Psoas muscle (tissue), 8 donors: ENCODE measurements at regions of chr2 and their contacts with region 1.

Region 1: GRCh38 chr2:190648289-190649034 is 421 bp upstream of the NAB1 start:
- DNase-seq: peak; percentile 92 to 93
- ATAC-seq: peak; percentile 86 to 88 (median 87)
- H3K4me3 ChIP-seq: peak overlapping the region; percentile 91
- H3K27ac ChIP-seq: peak overlapping the region; percentile 79
- H3K4me1 ChIP-seq: peaks cover 8% of the 10 kb centered on the region
- H3K27me3 ChIP-seq: no peaks in the 10 kb centered on the region
- CTCF ChIP-seq: no peak

Region 2: DNA sequence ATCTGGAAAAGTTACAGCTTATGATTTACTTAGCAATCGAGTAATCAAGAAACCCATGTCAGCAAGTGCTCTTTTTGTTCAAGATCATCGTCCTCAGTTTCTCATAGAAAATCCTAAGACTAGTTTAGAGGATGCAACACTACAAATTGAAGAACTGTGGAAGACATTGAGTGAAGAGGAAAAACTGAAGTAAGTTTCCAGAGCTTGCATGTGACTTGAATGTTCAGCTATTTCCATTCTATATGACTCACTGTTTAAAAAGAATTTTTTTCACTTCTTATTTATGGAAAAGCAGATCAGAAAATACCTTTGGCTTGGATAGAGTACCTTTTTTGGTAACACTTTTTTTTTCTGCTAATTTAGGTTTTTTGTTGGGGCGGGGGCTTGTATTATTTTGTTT is 793.5 kb before region 1 on chr2:
- intact Hi-C with region 1: loop called in 1 of 2 experiments (anchors 5 kb)
- DNase-seq: no peak
- ATAC-seq: no peak
- H3K4me3 ChIP-seq: no peak overlapping the region
- H3K27ac ChIP-seq: no peak overlapping the region
- H3K4me1 ChIP-seq: peaks cover 13% of the 10 kb centered on the region
- H3K27me3 ChIP-seq: no peaks in the 10 kb centered on the region
- CTCF ChIP-seq: no peak

Region 3: GRCh38 chr2:190683802-190684201 is 35.3 kb after region 1 on chr2:
- intact Hi-C with region 1: no loop called
- DNase-seq: no peak
- ATAC-seq: no peak
- H3K4me3 ChIP-seq: no peak overlapping the region
- H3K27ac ChIP-seq: no peak overlapping the region
- H3K4me1 ChIP-seq: no peaks in the 10 kb centered on the region
- H3K27me3 ChIP-seq: no peaks in the 10 kb centered on the region
- CTCF ChIP-seq: no peak

Region 4: GRCh38 chr2:191056228-191056627 is 407.8 kb after region 1 on chr2:
- intact Hi-C with region 1: no loop called
- DNase-seq: no peak
- ATAC-seq: no peak
- H3K4me3 ChIP-seq: no peak overlapping the region
- H3K27ac ChIP-seq: no peak overlapping the region
- H3K4me1 ChIP-seq: no peaks in the 10 kb centered on the region
- H3K27me3 ChIP-seq: no peaks in the 10 kb centered on the region
- CTCF ChIP-seq: no peak